Thyroid gland (tissue), 4 donors: ENCODE measurements at regions of chr14 and their contacts with region 1.

Region 1: GRCh38 chr14:100375963-100376735 is 53.0 kb downstream of the SLC25A47 start:
- DNase-seq: peak; percentile 95 to 96
- H3K4me3 ChIP-seq: peak within 1 kb of the TSS; percentile 32 to 82 (median 59)
- H3K27ac ChIP-seq: peak within 1 kb of the TSS; percentile 69 to 88 (median 83)
- H3K4me1 ChIP-seq: peaks cover 10 to 29% of the 10 kb centered on the region in 2 donors
- H3K27me3 ChIP-seq: no peaks in the 10 kb centered on the region
- CTCF ChIP-seq: no peak
- POLR2A ChIP-seq: peak in 1 of 2 donors; percentile 70

Region 2: DNA sequence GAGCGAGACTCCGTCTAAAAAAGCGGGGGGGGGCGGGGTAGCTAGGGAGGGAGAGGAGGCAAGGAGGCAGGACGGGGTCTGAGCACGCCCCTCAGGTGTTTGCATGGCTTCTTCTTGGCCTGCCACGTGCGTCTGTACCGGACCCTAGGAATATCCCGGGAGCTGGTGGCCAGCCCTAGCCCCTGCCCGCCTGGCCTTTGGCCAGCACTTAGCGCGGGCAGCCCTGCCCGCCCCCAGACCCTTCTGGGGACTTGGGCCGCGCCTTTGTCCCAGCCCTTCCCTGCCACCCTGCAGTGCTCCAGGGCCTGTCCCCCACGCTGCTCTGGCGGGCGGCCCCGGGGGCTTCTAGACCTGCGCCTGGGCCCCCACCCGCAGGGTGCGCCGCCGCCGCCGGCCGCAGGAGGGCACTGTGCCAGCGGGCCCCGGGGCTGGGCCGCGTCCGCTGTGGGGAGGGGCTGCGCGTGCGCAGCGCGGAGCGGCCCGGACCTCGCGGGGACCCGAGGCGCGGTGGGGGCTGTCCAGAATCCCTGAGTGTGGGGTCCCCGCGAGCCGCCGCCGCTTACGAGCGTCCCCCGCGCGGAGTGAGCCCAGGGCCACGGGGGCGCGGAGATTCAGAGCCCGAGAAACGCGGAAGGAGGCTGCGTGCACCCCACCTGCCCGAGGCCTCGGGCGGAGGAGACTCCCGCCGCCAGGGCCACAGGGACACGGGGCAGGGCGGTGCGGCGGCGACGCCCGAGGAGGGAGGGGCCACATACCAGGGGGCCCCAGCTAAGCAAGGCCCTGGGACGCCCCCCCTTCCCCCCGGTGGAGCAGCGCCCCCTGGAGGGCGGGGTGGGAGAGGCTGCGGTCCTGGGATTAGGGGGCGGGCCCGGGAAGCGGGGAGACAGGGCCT is 90.9 kb before region 1 on chr14:
- intact Hi-C with region 1: loop called (anchors 5 kb)
- DNase-seq: peak; percentile 62
- H3K4me3 ChIP-seq: peak overlapping the region in 1 of 3 donors; percentile 42
- H3K27ac ChIP-seq: peak overlapping the region; percentile 93
- H3K4me1 ChIP-seq: peaks cover 80 to 95% of the 10 kb centered on the region in 2 donors
- H3K27me3 ChIP-seq: no peaks in the 10 kb centered on the region
- CTCF ChIP-seq: peak; percentile 17 to 74 (median 54)
- POLR2A ChIP-seq: peak in 1 of 2 donors; percentile 51

Region 3: DNA sequence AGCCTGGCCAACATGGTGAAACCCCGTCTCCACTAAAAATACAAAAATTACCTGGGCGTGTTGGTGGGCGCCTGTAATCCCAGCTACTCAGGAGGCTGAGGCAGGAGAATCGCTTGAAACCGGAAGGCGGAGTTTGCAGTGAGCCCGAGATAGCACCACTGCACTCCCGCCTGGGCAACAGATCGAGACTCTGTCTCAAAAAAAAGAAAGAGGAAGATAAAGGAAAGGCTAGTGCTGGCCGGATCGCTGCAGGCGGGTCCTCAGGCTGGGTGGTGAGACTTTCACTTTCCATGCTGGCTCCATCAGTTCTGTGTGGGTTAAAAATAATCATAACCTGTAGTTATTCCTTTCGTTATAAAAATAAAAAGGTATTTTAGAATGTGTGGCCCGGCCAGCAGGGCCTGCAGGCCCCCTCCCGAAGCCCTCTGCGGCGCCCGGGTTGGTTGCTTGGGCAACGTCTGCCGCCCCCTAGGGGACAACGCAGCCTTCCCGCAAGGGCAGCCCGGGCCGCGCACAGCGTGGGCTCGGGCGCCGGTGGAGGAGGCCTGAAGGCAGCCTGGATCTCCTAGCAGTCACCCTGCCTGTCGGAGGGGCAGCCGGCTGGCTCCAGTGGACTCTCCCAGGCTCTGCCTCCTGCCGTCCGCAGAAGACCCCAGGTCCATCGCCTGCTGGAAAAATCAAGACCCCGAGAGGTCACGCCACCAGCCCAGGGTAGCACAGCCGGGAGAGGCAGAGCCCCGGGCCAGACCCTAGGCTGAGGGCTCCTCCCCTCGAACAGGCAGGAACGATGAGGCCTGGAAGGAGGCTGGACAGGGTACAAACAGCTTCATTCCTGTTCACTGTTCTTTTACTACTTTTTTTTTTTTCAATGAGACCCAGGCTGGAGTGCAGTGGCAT is 58.0 kb before region 1 on chr14:
- intact Hi-C with region 1: loop called (anchors 10 kb)
- DNase-seq: peak; percentile 69 to 76
- H3K4me3 ChIP-seq: peak overlapping the region in 1 of 3 donors; percentile 14
- H3K27ac ChIP-seq: peak overlapping the region in 2 of 3 donors; percentile 41 to 60
- H3K4me1 ChIP-seq: peaks cover 9 to 18% of the 10 kb centered on the region in 2 donors
- H3K27me3 ChIP-seq: no peaks in the 10 kb centered on the region
- CTCF ChIP-seq: peak; percentile 58 to 89 (median 82)
- POLR2A ChIP-seq: no peak

Region 4: DNA sequence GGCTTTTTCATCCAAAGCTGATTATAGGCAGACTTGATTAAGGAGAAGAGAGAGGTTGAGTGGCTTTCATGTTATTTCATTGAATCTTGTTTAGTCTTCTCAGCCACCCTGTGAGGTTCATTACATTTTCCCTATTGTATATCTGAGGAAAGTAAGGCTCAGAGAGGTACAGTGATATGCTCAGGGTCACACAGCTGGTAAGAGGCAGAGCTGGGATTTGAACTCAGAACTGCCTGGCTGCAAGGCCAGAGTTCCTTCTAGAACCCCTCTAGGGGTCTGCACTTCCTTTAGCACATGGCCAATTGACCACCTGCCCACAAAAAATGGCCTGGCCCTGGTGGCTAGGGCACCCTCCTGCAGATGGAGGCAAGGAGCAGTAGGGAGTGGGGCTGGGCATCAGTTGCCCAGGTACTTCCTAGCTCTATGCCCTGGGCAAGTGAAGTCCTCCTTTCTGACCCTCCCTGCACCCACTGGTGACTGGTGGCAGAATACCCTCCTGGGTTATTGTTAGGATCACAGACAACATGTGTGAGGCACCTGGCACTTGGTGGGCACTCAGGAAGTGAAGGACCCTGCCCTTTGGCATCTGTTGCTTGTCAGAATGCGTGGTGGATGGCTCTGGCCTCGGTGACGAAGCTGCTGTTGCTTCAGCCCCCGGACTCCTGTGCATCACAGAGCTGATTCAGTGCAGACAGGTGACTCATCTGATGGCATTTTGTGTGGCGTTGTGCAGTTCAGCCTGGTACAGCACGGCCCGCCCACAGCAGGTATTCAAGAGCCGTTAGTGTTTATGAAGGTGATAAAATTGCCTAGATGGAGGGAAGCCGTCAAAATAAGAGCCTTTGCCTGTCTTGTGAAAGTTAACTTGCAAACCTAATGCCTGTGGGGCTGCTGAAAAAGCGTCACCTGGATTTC is 62.8 kb after region 1 on chr14:
- intact Hi-C with region 1: no loop called
- DNase-seq: peak; percentile 15 to 54
- H3K4me3 ChIP-seq: no peak overlapping the region
- H3K27ac ChIP-seq: no peak overlapping the region
- H3K4me1 ChIP-seq: peaks cover 14 to 22% of the 10 kb centered on the region in 2 donors
- H3K27me3 ChIP-seq: no peaks in the 10 kb centered on the region
- CTCF ChIP-seq: no peak
- POLR2A ChIP-seq: no peak

Region 5: DNA sequence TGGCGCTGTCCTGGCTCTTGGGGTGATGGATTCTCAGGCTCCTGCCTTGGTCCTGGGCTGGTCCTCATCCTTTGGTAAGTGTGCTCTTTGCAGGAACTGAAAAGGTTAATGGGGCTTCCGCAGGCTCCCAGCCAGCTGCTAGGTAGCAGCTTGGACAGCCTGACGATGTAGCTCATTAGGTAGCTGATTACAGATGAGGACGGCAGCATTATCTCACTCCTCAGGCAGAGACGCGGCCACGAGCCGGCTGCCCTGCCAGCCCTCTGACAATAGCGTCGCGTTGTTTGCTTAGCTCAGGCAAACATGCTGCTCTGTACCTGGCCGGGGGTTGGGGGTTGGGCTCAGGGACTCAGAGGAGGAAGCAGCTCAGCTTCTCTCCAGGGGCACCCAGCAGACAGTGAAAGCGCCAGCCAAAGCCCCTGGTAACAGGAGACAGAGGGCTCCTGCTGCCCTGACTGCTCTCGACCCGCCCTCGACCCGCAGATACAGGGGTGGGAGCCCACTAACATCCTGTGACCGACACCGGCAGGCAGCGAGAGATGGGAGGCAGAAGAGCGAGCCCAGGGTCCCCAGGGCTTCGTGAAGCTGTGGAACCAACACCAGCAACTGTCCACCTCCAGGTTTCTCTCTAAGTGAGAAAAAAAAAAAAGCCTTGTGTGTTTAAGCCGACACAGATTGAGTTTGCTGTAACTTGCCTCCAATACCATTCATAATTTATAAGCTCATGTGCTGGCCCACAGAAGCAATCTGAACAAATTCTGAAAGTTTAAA is 297.1 kb after region 1 on chr14:
- intact Hi-C with region 1: no loop called
- DNase-seq: peak in 1 of 2 donors; percentile 27
- H3K4me3 ChIP-seq: no peak overlapping the region
- H3K27ac ChIP-seq: no peak overlapping the region
- H3K4me1 ChIP-seq: peaks cover 0 to 20% of the 10 kb centered on the region in 2 donors
- H3K27me3 ChIP-seq: peaks cover 3% of the 10 kb centered on the region
- CTCF ChIP-seq: no peak
- POLR2A ChIP-seq: no peak

Region 6: GRCh38 chr14:101183376-101184103 is 807.4 kb after region 1 on chr14:
- intact Hi-C with region 1: no loop called
- DNase-seq: no peak
- H3K4me3 ChIP-seq: no peak overlapping the region
- H3K27ac ChIP-seq: no peak overlapping the region
- H3K4me1 ChIP-seq: no peaks in the 10 kb centered on the region
- H3K27me3 ChIP-seq: no peaks in the 10 kb centered on the region
- CTCF ChIP-seq: peak in 1 of 6 experiments; percentile 29
- POLR2A ChIP-seq: no peak